PC-3 (cell line): ENCODE measurements at regions of chr1 and their contacts with region 1.

Region 1: GRCh38 chr1:111507411-111508201 is 4.2 kb upstream of the ADORA3 start:
- DNase-seq: peak; percentile 72
- ATAC-seq: peak; percentile 79
- H3K4me3 ChIP-seq: peak overlapping the region; percentile 60
- H3K27ac ChIP-seq: peak overlapping the region; percentile 70
- H3K4me1 ChIP-seq: peaks cover 12% of the 10 kb centered on the region
- H3K27me3 ChIP-seq: no peaks in the 10 kb centered on the region
- CTCF ChIP-seq: no peak

Region 2: GRCh38 chr1:111481387-111482221 is 26.0 kb before region 1 on chr1:
- CTCF ChIA-PET with region 1: interaction called, 20 read pairs
- POLR2A ChIA-PET with region 1: interaction called, 3 read pairs
- intact Hi-C with region 1: loop called (anchors 1 kb)
- DNase-seq: peak; percentile 81
- ATAC-seq: peak; percentile 96
- H3K4me3 ChIP-seq: no peak overlapping the region
- H3K27ac ChIP-seq: no peak overlapping the region
- H3K4me1 ChIP-seq: peaks cover 4% of the 10 kb centered on the region
- H3K27me3 ChIP-seq: no peaks in the 10 kb centered on the region
- CTCF ChIP-seq: peak; percentile 84

Region 3: DNA sequence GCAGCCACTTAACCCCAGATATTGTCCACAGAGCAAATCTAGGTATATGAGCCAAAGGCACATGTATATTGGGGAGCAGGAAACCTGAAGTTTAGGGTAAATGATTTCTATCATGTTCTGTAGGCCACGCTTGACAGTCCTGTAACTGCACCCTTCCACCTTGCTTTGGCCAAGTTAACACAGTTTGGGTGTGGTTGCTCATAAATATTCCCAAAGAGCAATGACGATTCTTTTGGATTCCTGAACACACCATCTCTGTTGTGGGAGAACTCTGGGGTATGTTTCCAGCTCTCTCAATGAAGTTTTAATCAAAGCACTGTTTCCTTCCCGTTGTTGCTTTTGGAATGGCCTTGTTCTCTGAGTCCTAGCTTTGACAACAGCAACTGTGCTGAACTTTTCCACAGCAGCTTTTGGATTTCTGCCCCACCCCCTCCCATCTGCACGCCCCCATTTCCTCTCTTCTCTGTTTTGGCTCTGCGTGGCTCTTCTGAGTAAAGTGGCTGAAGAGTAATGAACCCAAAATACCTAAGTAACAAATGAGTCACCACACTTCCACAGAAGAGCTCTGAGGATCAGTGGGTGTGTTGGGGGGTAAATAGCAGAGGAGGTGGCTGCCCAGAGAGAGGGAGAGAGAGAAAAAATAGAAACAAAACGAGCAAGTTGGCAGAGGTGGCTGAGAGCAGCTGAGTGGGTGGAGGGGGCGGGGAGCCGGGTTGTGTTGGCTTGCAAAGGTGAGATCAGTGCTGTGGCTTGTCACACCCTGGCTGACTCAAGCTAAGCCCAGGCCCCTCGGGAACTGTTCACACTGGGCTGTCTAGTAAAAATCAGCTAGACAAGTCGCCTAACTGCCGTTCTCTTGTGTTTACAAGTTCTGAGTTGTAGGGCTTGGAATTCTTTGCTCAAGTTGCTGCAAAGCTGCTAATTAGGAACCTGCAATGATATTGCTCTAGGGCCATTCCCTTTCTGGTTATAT is 85.1 kb after region 1 on chr1:
- CTCF ChIA-PET with region 1: interaction called, 13 read pairs
- POLR2A ChIA-PET with region 1: no interaction called
- intact Hi-C with region 1: loop called (anchors 1 kb)
- DNase-seq: peak; percentile 90
- ATAC-seq: peak; percentile 98
- H3K4me3 ChIP-seq: peak overlapping the region; percentile 46
- H3K27ac ChIP-seq: peak overlapping the region; percentile 73
- H3K4me1 ChIP-seq: peaks cover 25% of the 10 kb centered on the region
- H3K27me3 ChIP-seq: no peaks in the 10 kb centered on the region
- CTCF ChIP-seq: no peak

Region 4: DNA sequence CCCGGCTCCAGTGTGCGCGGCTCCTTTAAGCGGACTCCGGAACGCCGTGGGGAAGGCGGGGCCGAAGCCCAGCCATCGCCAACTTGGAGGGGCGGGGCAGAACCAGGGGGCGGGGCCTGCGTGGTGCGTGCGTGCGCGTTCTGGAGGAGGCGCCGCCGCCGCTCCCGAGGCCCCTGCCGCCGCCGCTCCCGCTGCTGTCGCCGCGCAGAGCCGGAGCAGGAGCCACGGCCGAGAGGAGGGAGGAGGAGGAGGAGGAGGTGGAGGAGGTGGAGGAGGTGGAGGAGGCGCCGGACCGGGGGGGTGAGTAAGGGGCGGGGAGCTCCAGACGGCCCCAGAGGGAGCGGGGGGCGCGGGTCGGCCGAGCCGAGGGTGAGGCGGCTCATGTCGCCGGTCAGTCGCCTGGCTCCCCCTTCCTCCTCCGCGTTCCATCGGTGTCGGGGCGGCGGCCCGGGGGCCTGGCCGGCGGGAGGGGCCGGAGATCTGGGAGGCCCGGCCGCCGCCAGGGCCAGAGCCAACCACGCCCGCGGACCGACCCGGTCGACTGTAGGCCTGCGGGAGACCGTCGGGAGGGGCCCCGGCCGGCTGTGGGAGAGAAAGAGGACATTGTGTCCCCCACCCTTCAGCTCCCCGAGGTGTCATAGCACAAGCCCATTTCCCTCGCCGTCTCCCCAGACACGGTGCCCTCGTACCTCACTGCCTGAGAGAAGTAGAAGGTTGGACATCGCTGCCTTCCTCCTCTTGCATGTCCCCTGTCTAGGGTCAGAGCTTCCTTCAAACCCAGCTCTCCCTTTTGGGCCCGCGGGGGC is 112.2 kb after region 1 on chr1 and contains the start of gene RAP1A:
- CTCF ChIA-PET with region 1: interaction called, 21 read pairs
- POLR2A ChIA-PET with region 1: no interaction called
- intact Hi-C with region 1: no loop called
- DNase-seq: peak; percentile 92
- ATAC-seq: peak; percentile 89
- H3K4me3 ChIP-seq: peak within 1 kb of the TSS; percentile 94
- H3K27ac ChIP-seq: peak within 1 kb of the TSS; percentile 34
- H3K4me1 ChIP-seq: peaks cover 18% of the 10 kb centered on the region
- H3K27me3 ChIP-seq: no peaks in the 10 kb centered on the region
- CTCF ChIP-seq: no peak
- total RNA-seq, gene RAP1A: 19.0 TPM in 2 replicates

Region 5: GRCh38 chr1:111656086-111657017 is 148.7 kb after region 1 on chr1:
- CTCF ChIA-PET with region 1: interaction called, 4 read pairs
- POLR2A ChIA-PET with region 1: interaction called, 6 read pairs
- intact Hi-C with region 1: loop called (anchors 1 kb)
- DNase-seq: peak; percentile 71
- ATAC-seq: peak; percentile 45; the same call in 1 of the 2 replicates
- H3K4me3 ChIP-seq: no peak overlapping the region
- H3K27ac ChIP-seq: no peak overlapping the region
- H3K4me1 ChIP-seq: no peaks in the 10 kb centered on the region
- H3K27me3 ChIP-seq: no peaks in the 10 kb centered on the region
- CTCF ChIP-seq: peak; percentile 87

Region 6: GRCh38 chr1:111704776-111705175 is 197.2 kb after region 1 on chr1:
- CTCF ChIA-PET with region 1: interaction called, 3 read pairs
- POLR2A ChIA-PET with region 1: no interaction called
- intact Hi-C with region 1: loop called (anchors 2 kb)
- DNase-seq: peak; percentile 66
- ATAC-seq: peak; percentile 94
- H3K4me3 ChIP-seq: no peak overlapping the region
- H3K27ac ChIP-seq: no peak overlapping the region
- H3K4me1 ChIP-seq: peaks cover 16% of the 10 kb centered on the region
- H3K27me3 ChIP-seq: no peaks in the 10 kb centered on the region
- CTCF ChIP-seq: no peak

Region 7: GRCh38 chr1:111769517-111770146 is 262.0 kb after region 1 on chr1:
- CTCF ChIA-PET with region 1: no interaction called
- POLR2A ChIA-PET with region 1: no interaction called
- intact Hi-C with region 1: loop called (anchors 2 kb)
- DNase-seq: peak; percentile 74
- ATAC-seq: peak; percentile 65
- H3K4me3 ChIP-seq: no peak overlapping the region
- H3K27ac ChIP-seq: no peak overlapping the region
- H3K4me1 ChIP-seq: no peaks in the 10 kb centered on the region
- H3K27me3 ChIP-seq: no peaks in the 10 kb centered on the region
- CTCF ChIP-seq: peak; percentile 89